A673 (cell line): ENCODE measurements at regions of chr12 and their contacts with region 1.

Region 1: DNA sequence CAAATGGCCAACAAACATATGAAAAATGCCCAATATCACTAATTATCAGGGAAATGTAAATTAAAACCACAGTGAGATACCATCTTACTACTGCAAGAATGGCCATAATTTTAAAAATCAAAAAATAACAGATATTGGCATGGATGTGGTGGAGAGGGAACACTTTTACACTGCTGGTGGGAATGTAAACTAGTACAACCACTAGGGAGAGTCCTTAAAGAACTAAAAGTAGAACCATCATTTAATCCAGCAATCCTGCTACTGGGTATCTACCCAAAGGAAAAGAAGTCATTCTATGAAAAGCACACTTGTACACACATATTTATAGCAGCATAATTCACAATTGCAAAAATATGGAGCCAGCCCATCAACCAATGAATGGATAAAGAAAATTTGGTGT is 459.7 kb downstream of the GXYLT1 start:
- DNase-seq: peak; percentile 72
- H3K4me3 ChIP-seq: no peak overlapping the region
- H3K27ac ChIP-seq: no peak overlapping the region
- H3K4me1 ChIP-seq: no peaks in the 10 kb centered on the region
- H3K27me3 ChIP-seq: no peaks in the 10 kb centered on the region
- CTCF ChIP-seq: peak; percentile 70

Region 2: DNA sequence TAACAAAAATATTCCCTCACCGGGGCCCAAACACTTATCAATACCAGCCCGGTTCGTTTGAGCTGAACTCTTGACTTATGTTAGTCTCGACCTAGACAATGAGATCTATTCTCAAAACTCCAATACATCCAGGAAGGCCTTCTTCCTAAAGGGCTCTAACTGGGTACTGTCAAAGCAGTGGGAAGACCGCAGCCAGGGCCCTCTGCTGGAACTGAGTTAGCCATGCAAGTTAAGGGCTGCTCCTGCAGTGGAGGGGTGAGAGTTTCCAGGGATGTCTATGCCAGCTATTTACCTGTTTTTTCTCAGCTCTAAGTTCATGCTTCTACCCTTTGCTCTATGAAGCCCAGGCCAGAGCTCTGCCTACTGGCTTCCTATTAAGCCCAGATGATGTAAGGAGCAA is 110.9 kb after region 1 on chr12:
- CTCF ChIA-PET with region 1: no interaction called
- POLR2A ChIA-PET with region 1: no interaction called
- intact Hi-C with region 1: loop called (anchors 5 kb)
- DNase-seq: peak; percentile 52
- H3K4me3 ChIP-seq: no peak overlapping the region
- H3K27ac ChIP-seq: peak overlapping the region; percentile 82
- H3K4me1 ChIP-seq: peaks cover 42% of the 10 kb centered on the region
- H3K27me3 ChIP-seq: no peaks in the 10 kb centered on the region
- CTCF ChIP-seq: peak; percentile 54

Region 3: GRCh38 chr12:41917855-41918460 is 233.0 kb after region 1 on chr12:
- CTCF ChIA-PET with region 1: no interaction called
- POLR2A ChIA-PET with region 1: no interaction called
- intact Hi-C with region 1: loop called (anchors 10 kb)
- DNase-seq: peak; percentile 50
- H3K4me3 ChIP-seq: peak overlapping the region; percentile 2
- H3K27ac ChIP-seq: peak overlapping the region; percentile 48
- H3K4me1 ChIP-seq: peaks cover 70% of the 10 kb centered on the region
- H3K27me3 ChIP-seq: no peaks in the 10 kb centered on the region
- CTCF ChIP-seq: no peak

Region 4: DNA sequence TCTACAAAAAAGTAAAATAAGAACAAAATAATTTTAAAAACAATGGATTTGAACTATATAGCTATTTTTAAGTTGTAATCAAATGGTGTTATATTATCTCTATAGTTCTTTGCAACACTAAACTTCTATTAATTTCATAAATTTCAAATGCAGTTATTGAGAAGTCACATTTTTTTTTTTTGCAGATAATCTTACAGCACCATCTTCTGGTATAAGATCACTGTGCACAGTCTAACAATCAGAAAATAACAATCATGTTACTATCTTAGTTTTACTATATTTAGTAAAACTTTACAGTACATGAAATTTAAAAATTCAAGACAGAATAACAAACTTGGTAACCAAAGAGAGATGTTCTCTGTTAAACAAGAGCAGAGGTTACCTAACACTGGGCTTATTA is 419.1 kb after region 1 on chr12:
- CTCF ChIA-PET with region 1: no interaction called
- POLR2A ChIA-PET with region 1: no interaction called
- intact Hi-C with region 1: loop called (anchors 2 kb)
- DNase-seq: peak; percentile 8
- H3K4me3 ChIP-seq: no peak overlapping the region
- H3K27ac ChIP-seq: no peak overlapping the region
- H3K4me1 ChIP-seq: peaks cover 19% of the 10 kb centered on the region
- H3K27me3 ChIP-seq: no peaks in the 10 kb centered on the region
- CTCF ChIP-seq: peak; percentile 65